Left cardiac atrium (tissue), 4 donors: ENCODE measurements at regions of chr10 and their contacts with region 1.

Region 1: GRCh38 chr10:91632671-91633550 is at the start of gene PPP1R3C:
- DNase-seq: peak; percentile 94
- ATAC-seq: peak; percentile 94 to 96
- total RNA-seq, gene PPP1R3C: 173 to 184 TPM

Region 2: DNA sequence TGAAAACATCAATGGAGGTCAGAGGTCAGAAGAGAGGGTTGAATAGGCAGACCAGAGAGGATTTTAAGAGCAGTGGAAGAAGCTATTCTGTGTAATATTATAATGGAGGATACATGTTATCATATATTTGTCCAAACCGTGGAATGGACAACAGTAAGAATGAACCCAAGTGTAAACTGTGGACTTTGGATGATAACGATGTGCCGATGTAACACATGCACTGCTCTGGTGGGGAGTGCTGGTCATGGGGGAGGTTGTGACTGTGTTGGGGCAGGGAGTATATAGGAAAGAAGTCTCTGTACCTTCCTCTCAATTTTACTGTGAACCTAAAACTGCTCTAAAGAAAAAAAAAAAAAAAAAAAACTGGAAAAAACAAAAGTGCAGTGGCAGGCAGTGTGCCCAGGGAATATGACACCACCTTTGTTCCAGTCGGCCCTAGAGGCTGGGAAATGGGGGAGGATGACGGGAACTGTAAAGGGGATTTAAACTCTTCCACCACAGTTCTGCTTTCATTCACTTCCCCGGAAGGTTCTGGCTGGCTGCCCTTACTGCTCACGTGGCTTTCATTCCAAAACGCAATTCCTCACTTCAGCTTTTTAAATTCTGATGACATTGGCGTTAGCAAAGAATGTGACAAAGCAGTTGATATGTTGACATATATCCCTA is 598.3 kb before region 1 on chr10:
- intact Hi-C with region 1: no loop called
- DNase-seq: peak; percentile 82
- ATAC-seq: peak; percentile 76 to 80

Region 3: DNA sequence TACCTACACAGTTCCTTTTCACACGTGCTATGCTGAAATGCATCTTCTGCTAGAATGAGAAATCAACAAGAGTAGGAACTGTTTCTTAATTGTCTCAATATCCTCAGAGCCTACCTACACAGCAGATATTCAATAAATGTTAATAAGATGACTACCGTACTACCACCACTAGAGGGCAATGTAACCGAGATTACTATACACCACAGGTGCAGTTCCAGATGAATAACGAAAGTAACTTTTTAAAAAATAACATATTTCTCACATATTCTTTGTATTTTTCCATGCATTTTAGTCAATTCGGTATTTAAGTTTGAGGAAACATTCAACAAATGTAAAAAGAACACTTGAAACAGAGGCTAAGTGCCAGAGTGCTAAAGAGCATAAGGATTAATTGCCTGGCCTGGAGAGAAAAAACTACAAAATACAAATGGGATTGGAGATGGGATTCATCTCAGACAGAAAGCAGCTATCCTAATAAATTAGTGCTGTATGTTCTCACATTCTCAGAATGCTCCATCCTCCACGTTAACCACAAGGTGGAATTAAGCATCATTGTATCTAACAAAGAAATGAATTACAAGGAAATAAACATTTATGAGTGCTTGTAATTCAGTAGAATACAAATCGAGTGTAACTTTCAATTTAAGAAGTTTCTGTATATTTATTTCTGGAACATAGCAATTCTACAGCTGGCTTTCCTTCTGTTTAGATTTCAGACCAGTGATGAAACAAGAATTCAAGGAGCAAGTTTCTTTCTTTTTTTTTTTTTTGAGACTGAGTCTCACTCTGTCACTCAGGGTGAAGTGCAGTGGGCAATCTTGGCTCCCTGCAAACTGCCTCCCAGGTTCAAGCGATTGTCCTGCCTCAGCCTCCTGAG is 243.0 kb before region 1 on chr10:
- intact Hi-C with region 1: loop called in 1 of 2 experiments (anchors 5 kb)
- DNase-seq: no peak
- ATAC-seq: peak; percentile 76

Region 4: DNA sequence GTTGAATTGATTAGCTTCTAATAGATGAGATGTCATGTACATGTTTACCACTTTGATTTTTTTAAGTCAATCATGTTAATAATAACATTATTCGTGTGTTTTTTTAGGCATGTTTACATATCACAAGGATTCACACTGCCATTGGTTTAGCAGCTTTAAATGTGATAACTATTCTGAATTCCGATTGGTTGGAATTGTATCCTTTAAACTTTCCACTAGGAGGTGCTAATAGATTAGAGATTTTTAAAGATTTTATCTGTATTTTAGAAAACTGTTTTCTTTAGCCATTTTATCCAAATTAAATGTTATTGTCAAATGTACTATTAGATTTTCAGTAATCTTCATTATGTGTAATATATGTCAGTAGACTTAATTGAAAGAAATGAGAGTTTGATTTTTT is 139.6 kb before region 1 on chr10:
- intact Hi-C with region 1: loop called (anchors 2 to 5 kb)
- DNase-seq: no peak
- ATAC-seq: no peak

Region 5: DNA sequence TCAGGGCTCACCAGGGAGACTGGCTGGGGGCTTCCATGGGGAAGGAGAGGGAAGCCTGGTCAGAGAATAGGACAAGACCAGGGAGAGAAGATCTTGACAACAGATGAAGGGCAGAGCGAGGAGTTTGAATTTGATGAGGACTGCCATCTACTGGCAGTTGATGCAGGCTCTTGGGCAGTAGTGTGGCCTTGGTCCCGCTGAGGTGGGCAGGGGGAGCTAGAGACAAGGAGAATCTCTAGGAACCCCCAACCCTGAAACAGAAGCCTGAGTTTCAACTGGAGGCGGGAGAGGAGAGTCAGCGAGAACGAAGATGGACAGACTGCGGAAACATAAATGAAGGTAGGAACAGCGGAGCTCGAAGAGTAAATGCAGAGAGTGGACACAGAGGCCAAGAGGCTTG is 81.1 kb before region 1 on chr10:
- intact Hi-C with region 1: loop called (anchors 2 to 5 kb)
- DNase-seq: peak; percentile 50
- ATAC-seq: peak; percentile 87 to 88

Region 6: GRCh38 chr10:91571671-91572070 is 61.2 kb before region 1 on chr10:
- intact Hi-C with region 1: loop called in 1 of 2 experiments (anchors 5 kb)
- DNase-seq: no peak
- ATAC-seq: no peak

Region 7: DNA sequence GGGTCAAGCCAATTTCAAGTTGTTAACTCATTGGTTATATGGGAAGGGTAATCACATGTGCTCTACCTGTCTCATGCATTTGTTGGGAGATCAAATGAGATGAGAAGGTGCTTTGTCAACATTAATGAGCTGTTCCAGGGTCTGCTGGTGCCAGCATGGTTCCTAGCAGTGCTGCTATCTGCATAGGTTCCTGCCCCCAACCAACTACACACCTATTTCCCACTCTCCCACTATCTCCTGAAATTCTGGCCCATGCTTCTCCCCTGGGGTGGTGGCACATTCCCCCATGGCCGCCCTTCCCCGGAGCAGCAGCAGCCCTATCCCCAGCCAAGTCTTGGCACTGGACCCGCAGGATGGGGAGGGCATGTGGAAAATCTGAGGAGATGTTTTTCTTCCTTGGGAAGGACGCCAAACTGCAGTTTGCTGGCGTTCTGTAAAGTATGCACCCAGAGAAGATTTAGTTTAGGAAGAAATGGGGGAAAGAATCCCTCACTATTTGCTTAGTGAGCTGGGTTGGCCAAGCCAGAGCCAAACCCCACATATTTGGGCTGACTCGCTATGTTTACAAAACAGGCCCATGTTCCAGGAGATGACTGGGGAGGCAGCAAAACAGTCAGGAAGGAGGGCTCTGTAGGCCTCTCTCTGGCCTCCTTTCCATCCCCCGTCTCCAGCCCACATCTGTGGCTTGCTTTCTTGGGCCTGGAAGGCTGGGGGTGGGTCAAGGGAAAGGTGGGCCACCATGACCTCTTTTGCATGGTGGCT is 42.6 kb before region 1 on chr10:
- intact Hi-C with region 1: loop called in 1 of 2 experiments (anchors 5 kb)
- DNase-seq: peak; percentile 77
- ATAC-seq: peak; percentile 41 to 58

Region 8: DNA sequence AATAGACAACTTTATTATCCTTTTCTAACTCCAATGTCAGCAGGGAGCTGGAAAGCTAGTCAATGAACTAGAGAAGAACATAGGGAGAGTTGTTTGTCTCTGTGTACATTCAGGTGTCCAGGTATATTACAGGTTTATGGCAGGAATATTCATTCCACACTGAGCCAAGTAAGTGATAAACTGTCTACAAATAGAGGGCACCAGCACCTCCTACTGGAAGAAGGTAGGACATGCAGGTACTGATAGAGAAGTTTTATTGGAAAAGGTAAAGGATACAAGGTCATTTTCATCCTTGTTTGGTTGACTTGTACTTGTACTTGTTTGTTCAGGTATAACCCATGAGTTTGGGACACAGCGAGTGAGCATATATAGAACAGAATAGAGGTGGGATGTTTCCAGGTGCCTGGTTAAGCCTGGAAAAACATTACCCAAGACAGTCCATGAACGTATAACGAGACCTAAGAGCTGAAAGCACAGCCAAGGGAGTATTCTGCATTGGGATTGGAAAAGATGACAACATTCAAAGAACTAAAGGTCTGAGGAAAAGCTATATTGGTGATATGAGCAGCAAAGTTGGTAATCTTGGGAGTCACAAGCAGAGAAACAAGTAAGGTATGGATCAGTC is 61.4 kb after region 1 on chr10:
- intact Hi-C with region 1: loop called in 1 of 2 experiments (anchors 5 kb)
- DNase-seq: no peak
- ATAC-seq: no peak

Region 9: DNA sequence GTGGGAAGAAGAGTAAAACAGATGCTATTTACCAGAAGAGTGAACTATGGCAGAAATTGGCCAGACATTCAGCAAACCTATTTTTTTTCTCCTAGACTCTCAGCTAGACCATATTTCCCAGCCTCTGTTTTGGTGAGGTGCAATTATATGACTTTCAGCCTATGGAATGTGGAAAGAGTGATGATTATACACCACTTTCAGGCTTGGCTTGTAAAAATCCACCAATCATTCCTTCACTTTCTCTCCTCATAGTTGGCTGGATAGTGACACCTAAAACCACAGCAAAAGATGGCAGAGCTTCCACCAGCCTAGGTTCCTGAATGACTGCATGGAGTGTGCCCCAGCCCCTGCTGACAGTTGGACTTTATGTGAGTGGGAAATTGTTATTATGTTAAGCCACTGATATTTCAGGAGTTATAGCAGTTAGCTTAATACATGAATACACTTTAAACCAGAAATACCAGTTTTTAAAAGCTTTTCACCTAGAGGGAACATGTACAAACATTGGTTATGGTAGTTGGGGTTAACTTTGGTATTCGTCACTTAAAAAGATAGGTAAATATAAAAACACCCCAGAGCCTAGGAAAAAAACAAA is 146.2 kb after region 1 on chr10:
- intact Hi-C with region 1: no loop called
- DNase-seq: no peak
- ATAC-seq: no peak